ENCODE measurements at regions of chr5 and their contacts with region 1.

Region 1: DNA sequence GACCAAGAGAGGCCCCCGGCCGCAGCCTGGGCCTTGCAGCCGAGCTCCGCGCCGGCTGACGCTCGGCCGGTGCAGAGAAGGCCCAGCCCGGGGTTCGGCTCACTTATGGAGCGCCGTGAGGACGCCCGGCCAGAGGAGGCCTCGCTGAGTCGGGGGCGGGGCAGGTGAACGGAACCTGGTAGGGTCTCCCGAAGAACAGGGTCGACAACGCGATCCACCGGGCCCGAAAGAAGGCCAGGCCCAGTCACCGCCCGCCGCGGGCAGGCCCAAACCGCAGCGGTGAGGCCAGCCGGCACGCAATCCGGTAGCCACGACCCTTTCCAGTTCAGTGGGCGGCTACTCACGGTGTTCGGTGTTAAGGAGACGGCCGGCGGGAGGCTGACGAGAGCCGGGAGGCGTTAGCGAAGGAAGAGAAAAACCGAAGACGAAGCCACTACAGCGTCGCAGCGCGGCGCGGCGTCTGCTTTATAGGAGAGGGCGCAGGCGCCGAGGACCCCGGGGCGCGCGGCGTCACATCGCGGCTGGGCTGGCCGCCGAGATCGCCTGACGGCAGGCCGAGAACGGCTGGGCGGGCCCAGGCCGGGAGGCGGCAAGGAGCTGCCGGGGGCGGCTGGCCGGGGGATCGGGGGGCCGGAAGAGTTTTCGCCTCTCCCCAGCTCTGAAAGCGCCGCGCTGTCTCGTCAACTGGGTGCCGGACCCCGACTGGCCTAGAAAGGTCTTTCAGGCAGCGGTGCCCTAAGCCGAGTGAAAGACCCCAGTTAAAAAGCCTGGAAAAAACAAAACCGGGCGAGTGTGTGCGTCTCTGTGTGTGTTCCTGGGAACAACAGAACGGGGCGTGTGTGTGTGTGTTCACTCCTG is at the start of gene SKP1:
- DNase-seq: peak; percentile 93
- H3K4me3 ChIP-seq: peak within 1 kb of the TSS; percentile 67 to 94 (median 94)
- H3K27ac ChIP-seq: peak within 1 kb of the TSS; percentile 95 to 99 (median 98)
- H3K4me1 ChIP-seq: peaks cover 33 to 51% (median 46%) of the 10 kb centered on the region in 4 donors
- H3K27me3 ChIP-seq: no peaks in the 10 kb centered on the region
- CTCF ChIP-seq: no peak
- EP300 ChIP-seq: no peak
- POLR2A ChIP-seq: peak; percentile 90
- total RNA-seq, gene SKP1: 170 to 345 (median 322) TPM

Region 2: GRCh38 chr5:134225618-134226440 is 49.1 kb after region 1 on chr5 and contains the start of gene PPP2CA:
- intact Hi-C with region 1: loop called (anchors 5 kb)
- DNase-seq: peak; percentile 100
- H3K4me3 ChIP-seq: peak within 1 kb of the TSS; percentile 85 to 100 (median 98)
- H3K27ac ChIP-seq: peak within 1 kb of the TSS; percentile 100
- H3K4me1 ChIP-seq: peaks cover 32 to 52% (median 51%) of the 10 kb centered on the region in 4 donors
- H3K27me3 ChIP-seq: no peaks in the 10 kb centered on the region
- CTCF ChIP-seq: peak in 1 of 3 experiments; percentile 23
- EP300 ChIP-seq: no peak
- POLR2A ChIP-seq: peak; percentile 92
- total RNA-seq, gene PPP2CA: 89.0 to 142 (median 115) TPM

Region 3: DNA sequence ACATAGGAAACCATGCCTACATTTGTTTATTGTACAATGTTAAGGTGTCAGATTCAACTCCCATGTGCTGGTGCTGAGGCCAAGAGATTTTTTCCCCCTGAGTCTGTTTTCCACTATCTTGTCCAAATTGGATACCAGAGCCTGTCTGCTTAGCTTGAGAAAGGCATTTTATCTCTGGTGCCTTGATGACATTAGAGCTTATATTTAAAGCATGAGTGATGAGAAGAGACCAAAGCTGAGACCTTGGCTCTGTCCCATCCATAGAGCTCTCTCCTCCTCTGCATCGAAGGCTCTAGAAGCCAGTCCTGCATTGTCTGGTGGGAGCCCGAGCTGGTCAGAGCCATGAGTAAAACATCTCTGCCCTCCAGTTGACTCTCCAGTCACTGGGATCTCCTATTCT is 59.6 kb after region 1 on chr5:
- intact Hi-C with region 1: no loop called
- DNase-seq: no peak
- H3K4me3 ChIP-seq: no peak overlapping the region
- H3K27ac ChIP-seq: peak overlapping the region in 1 of 4 donors; percentile 18
- H3K4me1 ChIP-seq: peaks cover 24 to 27% (median 26%) of the 10 kb centered on the region in 4 donors
- H3K27me3 ChIP-seq: no peaks in the 10 kb centered on the region
- CTCF ChIP-seq: no peak
- EP300 ChIP-seq: no peak
- POLR2A ChIP-seq: no peak

Region 4: GRCh38 chr5:134577796-134578363 is 401.1 kb after region 1 on chr5:
- intact Hi-C with region 1: loop called (anchors 10 kb)
- DNase-seq: peak; percentile 95
- H3K4me3 ChIP-seq: no peak overlapping the region
- H3K27ac ChIP-seq: peak overlapping the region in 1 of 4 donors; percentile 32
- H3K4me1 ChIP-seq: peaks cover 48 to 83% (median 69%) of the 10 kb centered on the region in 4 donors
- H3K27me3 ChIP-seq: no peaks in the 10 kb centered on the region
- CTCF ChIP-seq: peak; percentile 77 to 86 (median 79)
- EP300 ChIP-seq: no peak
- POLR2A ChIP-seq: no peak